Colonic mucosa (tissue), 4 donors: ENCODE measurements at regions of chr2 and their contacts with region 1.

Region 1: DNA sequence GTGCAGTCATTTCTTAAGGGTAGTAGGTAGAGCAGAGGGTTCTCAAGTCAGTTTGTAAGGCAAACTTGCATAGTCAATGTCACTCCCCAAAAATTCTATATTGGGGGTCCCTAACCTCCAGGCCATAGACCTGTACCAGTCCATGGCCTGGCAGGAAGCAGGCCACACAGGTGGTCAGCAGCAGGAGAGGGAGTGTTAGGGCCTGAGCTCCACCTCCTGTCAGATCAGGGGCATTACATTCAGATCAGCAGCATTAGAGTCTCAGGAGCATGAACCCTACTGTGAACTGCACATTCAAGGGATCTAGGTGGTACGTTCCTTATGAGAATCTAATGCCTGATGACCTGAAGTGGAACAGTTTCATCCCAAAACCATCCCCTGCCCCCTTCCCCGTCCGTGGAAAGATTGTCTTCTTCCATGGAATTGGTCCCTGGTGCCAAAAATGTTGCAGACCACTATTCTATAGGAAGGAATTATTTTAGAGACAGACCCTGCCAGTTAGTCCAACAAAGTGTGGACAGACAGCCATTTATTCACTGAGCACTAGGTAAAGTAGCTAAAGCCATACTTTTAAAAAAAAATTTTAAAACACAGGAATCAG is 6.7 kb downstream of the COA5 start:
- DNase-seq: no peak
- H3K4me3 ChIP-seq: no peak overlapping the region
- H3K27ac ChIP-seq: no peak overlapping the region
- H3K4me1 ChIP-seq: no peaks in the 10 kb centered on the region
- H3K27me3 ChIP-seq: no peaks in the 10 kb centered on the region
- CTCF ChIP-seq: peak; percentile 54

Region 2: DNA sequence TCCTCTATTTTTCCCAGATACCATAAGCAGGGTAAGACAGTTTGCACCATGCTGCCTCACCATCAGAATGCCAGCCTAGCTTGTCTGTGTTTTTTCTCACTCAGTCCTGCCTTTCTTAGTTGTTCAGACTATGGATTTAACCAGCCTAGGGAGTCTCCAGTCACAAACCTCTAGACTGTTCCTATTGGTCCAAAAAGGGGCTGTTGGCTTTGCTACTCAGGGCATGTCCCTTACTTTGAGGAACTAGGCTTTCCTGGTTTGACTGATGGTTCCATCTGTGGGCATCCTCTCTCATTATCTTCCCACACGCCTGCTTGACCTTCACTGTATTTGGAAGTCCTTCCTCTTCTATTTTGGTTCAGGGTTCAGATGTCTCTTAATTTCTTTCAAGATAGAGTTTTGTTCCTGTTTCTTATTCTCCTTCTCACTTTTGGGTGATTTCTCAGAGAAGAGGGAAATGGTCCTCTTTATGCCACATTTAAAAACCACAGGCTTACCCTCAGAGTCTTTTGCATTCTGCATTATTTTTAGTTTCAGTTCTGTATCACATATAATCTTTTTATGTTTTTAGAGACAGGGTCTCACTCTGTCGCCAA is 574.6 kb before region 1 on chr2:
- intact Hi-C with region 1: no loop called
- DNase-seq: peak; percentile 15
- H3K4me3 ChIP-seq: no peak overlapping the region
- H3K27ac ChIP-seq: no peak overlapping the region
- H3K4me1 ChIP-seq: no peaks in the 10 kb centered on the region
- H3K27me3 ChIP-seq: no peaks in the 10 kb centered on the region
- CTCF ChIP-seq: no peak

Region 3: DNA sequence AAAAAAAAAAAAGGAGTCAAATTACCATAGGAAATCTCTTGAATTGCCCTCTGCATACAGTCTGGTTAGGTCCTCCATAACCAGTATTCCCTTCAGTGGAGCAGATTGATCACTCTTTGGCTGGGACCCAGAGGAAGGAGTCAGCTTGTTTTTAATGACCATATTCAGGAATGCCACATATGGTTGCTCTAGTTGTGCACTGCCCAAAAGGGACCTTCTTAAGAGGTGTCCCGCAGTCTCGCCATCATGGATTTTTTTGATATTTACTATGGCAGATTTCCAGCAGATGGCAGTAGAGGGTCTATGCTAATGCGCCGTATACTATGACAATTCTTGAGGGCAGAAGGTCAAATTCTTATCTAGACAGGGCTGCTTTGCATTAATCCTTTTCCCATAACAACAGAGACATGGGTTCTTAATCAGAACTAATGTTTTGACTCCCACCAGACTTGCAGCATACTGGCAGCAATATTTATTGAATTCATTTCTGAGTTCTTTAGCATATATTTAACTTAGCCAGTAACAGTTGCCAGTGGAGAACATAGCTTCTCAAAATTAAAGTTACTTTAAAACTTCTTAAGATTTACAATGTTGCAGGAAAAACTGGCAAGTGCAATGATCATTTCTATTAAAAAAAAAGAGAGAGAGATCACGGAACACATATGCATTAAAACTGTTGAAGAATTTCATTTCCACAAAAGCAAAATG is 188.7 kb before region 1 on chr2:
- intact Hi-C with region 1: loop called (anchors 5 kb)
- DNase-seq: peak; percentile 68
- H3K4me3 ChIP-seq: no peak overlapping the region
- H3K27ac ChIP-seq: no peak overlapping the region
- H3K4me1 ChIP-seq: no peaks in the 10 kb centered on the region
- H3K27me3 ChIP-seq: no peaks in the 10 kb centered on the region
- CTCF ChIP-seq: peak; percentile 57

Region 4: DNA sequence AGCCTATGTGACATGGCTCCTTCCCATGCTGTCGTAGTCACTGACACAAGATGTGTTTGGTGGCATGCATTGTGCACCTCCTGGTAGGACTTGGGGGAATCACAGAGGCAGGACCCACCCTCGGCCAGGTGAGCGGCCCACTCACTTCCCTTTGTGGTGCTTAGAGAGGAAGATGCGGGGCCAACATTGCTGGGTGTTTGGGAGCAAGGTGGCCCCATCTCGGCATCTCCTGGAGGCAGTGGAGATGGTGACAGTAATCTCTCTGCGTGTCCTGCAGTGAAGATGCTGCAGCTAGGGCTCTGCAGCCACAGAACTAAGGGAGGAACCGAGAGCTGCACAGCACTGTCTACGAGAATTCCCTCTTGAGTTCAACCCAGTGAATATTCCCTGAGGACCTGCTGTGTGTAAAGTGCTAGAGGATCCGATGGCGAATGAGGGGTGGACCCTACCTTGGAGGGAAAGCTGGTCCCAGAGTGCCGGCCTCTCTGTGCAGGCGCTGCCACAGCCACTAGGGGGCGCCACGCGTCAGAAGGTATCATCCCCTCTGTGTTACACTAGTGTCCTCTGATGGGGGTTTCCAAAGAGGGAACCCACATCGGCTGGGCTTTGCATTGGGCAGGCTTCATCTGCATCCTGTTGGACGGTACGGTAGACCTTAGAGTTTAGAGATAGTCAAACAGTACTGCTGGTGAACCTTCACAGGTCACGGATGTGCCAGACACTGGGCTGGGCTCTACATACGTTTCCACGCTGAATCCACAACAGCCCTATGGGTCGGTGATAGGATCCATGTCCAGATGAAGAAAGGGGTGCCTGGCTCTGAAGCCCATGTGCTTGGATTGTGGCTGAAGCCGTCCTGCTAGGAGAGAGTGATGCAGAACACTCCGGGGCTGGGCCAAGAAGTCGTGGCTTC is 32.5 kb before region 1 on chr2:
- intact Hi-C with region 1: loop called (anchors 5 kb)
- DNase-seq: peak; percentile 70
- H3K4me3 ChIP-seq: no peak overlapping the region
- H3K27ac ChIP-seq: no peak overlapping the region
- H3K4me1 ChIP-seq: no peaks in the 10 kb centered on the region
- H3K27me3 ChIP-seq: no peaks in the 10 kb centered on the region
- CTCF ChIP-seq: peak; percentile 91